ENCODE measurements at regions of chr2 and their contacts with region 1.

Region 1: GRCh38 chr2:130797493-130798435 is 39.0 kb upstream of the ARHGEF4 start:
- DNase-seq: peak; percentile 93
- H3K4me3 ChIP-seq: peak overlapping the region; percentile 78
- H3K27ac ChIP-seq: peak overlapping the region; percentile 92
- H3K4me1 ChIP-seq: peaks cover 18% of the 10 kb centered on the region
- H3K27me3 ChIP-seq: peaks cover 31% of the 10 kb centered on the region
- CTCF ChIP-seq: peak; percentile 79

Region 2: DNA sequence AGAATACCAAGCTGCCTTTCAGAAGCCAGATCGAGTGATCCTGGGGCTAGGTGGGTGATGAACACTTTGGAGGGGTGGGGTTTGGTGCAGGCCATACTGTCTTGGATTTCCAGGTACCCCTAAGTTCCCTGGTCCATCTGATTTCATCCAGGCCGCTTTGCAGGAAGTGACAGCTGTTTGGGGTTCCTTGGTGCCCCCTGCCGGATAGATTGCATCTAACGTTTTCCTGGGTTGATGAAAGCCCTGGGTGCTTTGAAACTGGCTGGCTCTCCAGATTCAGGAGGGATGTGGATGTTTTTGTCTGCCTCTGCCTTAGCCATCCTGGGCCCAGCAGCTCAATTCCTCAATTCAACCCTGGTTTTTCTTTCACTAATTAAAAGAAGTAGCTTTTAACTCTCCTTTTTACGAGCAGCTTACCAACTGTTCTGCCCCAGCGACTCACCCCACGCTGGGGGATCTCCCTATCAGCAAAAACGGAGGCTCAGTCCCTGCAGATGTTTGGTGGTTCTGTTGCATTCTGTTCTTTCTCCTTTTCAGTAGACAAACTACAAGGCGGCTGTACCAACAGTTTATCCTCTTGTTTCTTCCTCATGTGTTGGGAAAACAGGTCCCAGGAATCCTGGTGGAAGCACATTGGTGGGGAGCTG is 76.1 kb after region 1 on chr2:
- intact Hi-C with region 1: loop called (anchors 5 kb)
- DNase-seq: peak; percentile 57
- H3K4me3 ChIP-seq: no peak overlapping the region
- H3K27ac ChIP-seq: no peak overlapping the region
- H3K4me1 ChIP-seq: no peaks in the 10 kb centered on the region
- H3K27me3 ChIP-seq: peaks cover 36% of the 10 kb centered on the region
- CTCF ChIP-seq: peak; percentile 71

Region 3: DNA sequence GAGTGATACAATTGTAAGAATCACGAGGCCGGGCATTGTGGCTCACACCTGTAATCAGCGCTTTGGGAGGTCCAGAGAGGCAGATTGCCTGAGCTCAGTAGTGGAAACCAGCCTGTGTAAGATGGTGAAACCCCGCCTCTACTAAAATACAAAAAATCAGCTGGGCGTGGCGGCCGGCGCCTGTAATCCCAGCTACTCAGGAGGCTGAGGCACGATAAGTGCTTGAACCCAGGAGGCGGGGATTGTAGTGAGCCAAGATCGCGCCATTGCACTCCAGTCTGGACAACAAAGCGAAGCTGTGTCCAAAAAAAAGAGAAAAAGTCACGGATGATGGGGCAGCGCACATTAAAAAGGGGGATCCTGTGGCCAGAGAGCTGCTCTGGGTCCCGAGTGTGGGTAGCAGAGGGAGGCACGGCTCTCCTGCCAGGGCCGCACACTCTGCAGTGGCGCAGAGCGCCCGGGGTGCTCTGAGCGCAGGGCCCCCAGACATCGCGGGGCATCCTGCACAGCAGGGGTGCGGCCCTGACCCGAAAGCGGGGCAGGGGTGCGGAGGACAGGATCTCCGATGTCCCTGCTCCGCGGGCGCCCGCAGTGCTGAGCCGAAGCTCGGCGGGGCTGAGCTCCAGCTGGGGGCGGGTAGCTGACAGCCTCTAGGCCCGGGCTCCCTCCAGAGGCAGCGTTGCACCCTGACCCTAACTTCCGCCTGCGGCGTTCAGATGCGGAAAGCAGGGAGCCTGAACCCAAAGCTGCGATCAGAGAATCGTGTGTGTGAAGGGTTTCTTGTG is 596.6 kb after region 1 on chr2:
- intact Hi-C with region 1: no loop called
- DNase-seq: no peak
- H3K4me3 ChIP-seq: peak overlapping the region; percentile 44
- H3K27ac ChIP-seq: no peak overlapping the region
- H3K4me1 ChIP-seq: no peaks in the 10 kb centered on the region
- H3K27me3 ChIP-seq: peaks cover 43% of the 10 kb centered on the region
- CTCF ChIP-seq: no peak

Measured in left ventricle myocardium inferior (tissue), 1 donor.